CD8-positive, alpha-beta T cell (primary cell): ENCODE measurements at regions of chr11 and their contacts with region 1.

Region 1: GRCh38 chr11:1652771-1653540 is 23.4 kb downstream of the KRTAP5-5 start:
- DNase-seq: peak; percentile 59 to 89 (median 79)
- ATAC-seq: peak; percentile 97
- H3K4me3 ChIP-seq: no peak overlapping the region
- H3K4me3 Mint-ChIP-seq: no peak overlapping the region
- H3K27ac ChIP-seq: no peak overlapping the region
- H3K27ac Mint-ChIP-seq: no peak overlapping the region
- H3K4me1 ChIP-seq: no peaks in the 10 kb centered on the region
- H3K4me1 Mint-ChIP-seq: no peaks in the 10 kb centered on the region
- H3K27me3 ChIP-seq: peaks cover 3 to 12% of the 10 kb centered on the region in 2 experiments
- H3K27me3 Mint-ChIP-seq: peaks cover 23% of the 10 kb centered on the region
- CTCF ChIP-seq: peak; percentile 99

Region 2: DNA sequence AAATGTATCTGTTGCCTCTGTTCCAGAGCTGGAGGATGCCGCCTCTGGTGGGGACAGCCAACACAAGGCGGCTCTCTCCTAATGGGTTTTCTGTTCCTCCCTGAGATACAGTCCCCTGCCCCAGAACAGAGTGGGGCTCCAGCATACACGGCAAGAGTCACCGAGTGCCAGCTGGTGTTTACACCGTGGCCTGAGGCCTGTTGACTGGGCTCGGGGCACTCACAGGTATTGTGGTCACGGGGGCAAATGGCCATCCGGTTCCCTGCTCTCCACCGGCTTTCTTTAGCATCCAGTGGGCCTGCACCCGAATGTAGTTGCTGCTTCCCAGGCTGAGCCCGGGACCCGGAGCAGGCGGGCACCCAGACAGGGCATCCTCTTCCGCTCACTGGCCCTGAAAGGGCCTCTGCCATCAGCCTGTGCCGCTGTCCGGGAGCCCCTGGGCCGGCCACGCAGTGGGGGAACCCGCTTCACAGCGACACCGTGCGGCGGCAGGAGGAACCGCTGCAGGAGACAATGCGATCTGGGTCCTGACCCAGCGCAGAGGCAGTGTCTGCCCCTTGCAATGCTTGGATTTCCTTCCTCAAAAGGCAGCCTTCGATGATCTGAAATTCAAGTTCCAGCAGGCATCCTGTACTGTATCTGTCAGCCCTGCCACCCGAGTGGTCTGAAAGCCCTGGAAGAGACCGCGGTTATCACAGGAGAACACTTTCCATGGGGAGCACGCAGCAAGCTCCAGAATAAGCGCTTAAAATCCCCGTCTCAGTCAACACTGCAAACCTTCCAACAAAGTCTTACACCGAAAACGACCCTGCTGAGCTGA is 24.2 kb before region 1 on chr11:
- CTCF ChIA-PET with region 1: interaction called, 10 read pairs
- POLR2A ChIA-PET with region 1: no interaction called
- intact Hi-C with region 1: no loop called
- DNase-seq: peak; percentile 27 to 75 (median 62)
- ATAC-seq: peak; percentile 93
- H3K4me3 ChIP-seq: no peak overlapping the region
- H3K4me3 Mint-ChIP-seq: no peak overlapping the region
- H3K27ac ChIP-seq: no peak overlapping the region
- H3K27ac Mint-ChIP-seq: no peak overlapping the region
- H3K4me1 ChIP-seq: peaks cover 12% of the 10 kb centered on the region
- H3K4me1 Mint-ChIP-seq: peaks cover 6% of the 10 kb centered on the region
- H3K27me3 ChIP-seq: peaks cover 6 to 10% of the 10 kb centered on the region in 2 experiments
- H3K27me3 Mint-ChIP-seq: peaks cover 30% of the 10 kb centered on the region
- CTCF ChIP-seq: peak; percentile 89

Region 3: GRCh38 chr11:1640076-1640946 is 12.6 kb before region 1 on chr11:
- CTCF ChIA-PET with region 1: interaction called, 21 read pairs
- POLR2A ChIA-PET with region 1: no interaction called
- intact Hi-C with region 1: no loop called
- DNase-seq: peak in 6 of 9 experiments; percentile 9 to 59 (median 32)
- ATAC-seq: no peak
- H3K4me3 ChIP-seq: no peak overlapping the region
- H3K4me3 Mint-ChIP-seq: no peak overlapping the region
- H3K27ac ChIP-seq: no peak overlapping the region
- H3K27ac Mint-ChIP-seq: no peak overlapping the region
- H3K4me1 ChIP-seq: no peaks in the 10 kb centered on the region
- H3K4me1 Mint-ChIP-seq: no peaks in the 10 kb centered on the region
- H3K27me3 ChIP-seq: peaks cover 0 to 2% of the 10 kb centered on the region in 2 experiments
- H3K27me3 Mint-ChIP-seq: peaks cover 24% of the 10 kb centered on the region
- CTCF ChIP-seq: peak; percentile 77

Region 4: DNA sequence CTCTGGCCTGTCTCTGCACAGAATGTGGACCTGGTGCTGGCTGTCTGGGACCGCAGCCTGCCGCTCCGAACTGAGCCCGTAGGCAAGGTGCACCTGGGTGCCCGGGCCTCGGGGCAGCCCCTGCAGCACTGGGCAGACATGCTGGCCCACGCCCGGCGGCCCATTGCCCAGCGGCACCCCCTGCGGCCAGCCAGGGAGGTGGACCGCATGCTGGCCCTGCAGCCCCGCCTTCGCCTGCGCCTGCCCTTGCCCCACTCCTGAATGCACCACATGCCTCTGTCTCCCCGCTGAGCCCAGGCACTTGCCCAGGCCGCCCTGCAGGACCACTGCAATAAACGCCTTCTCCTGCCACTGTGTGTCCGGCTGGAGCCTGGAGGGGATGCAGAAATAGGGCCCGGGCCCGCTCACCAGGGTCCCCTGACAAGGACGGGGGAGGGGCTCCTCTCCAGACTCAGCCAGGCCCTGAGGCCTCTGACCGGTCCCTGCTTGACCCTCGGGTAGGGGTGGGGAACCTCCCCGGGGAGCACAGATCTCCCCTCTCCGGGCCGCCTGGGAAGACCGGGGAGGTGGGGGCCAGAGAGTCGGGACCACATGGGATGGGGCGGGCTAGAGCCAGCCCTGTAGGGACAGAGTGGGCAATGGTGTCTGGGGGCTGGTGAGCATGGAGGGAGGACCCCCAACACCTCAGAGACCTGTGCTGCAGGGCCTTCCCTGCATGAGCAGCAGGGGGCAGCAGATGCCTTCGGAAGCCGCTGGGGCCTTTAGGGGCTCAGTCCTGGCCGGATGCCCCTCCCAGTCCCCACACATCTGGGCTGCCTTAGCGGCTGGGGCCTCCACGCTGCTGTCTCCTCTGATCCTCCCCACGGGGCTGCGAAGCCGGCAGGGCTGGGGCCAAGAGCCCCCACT is 184.5 kb after region 1 on chr11:
- CTCF ChIA-PET with region 1: interaction called, 74 read pairs
- POLR2A ChIA-PET with region 1: no interaction called
- intact Hi-C with region 1: loop called in 1 of 2 experiments (anchors 1 kb)
- DNase-seq: peak; percentile 73 to 94 (median 88)
- ATAC-seq: peak; percentile 98
- H3K4me3 ChIP-seq: no peak overlapping the region
- H3K4me3 Mint-ChIP-seq: no peak overlapping the region
- H3K27ac ChIP-seq: no peak overlapping the region
- H3K27ac Mint-ChIP-seq: no peak overlapping the region
- H3K4me1 ChIP-seq: peaks cover 25% of the 10 kb centered on the region
- H3K4me1 Mint-ChIP-seq: peaks cover 10% of the 10 kb centered on the region
- H3K27me3 ChIP-seq: peaks cover 0 to 6% of the 10 kb centered on the region in 2 experiments
- H3K27me3 Mint-ChIP-seq: no peaks in the 10 kb centered on the region
- CTCF ChIP-seq: peak; percentile 84

Region 5: DNA sequence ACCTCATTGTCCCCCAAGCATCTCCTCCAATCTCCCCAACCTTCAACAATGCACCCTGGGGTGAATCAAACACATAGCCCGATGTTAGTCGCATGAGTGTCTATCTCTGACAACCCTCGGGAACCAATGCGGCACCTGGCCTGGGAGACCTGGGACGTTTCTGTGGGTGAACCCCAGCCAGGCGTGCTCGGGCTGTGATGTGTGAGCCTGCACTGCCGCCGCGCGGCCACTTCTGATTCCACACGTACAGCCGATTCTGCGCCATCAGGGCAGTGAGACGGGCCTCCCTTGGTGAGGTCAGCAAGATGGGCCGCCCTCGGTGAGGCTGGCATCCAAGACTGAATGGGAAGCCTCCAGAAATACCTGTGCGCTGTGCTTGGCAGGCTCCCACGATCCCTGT is 349.9 kb after region 1 on chr11:
- CTCF ChIA-PET with region 1: interaction called, 12 read pairs
- POLR2A ChIA-PET with region 1: no interaction called
- intact Hi-C with region 1: no loop called
- DNase-seq: no peak
- ATAC-seq: peak; percentile 50
- H3K4me3 ChIP-seq: no peak overlapping the region
- H3K4me3 Mint-ChIP-seq: no peak overlapping the region
- H3K27ac ChIP-seq: no peak overlapping the region
- H3K27ac Mint-ChIP-seq: no peak overlapping the region
- H3K4me1 ChIP-seq: no peaks in the 10 kb centered on the region
- H3K4me1 Mint-ChIP-seq: no peaks in the 10 kb centered on the region
- H3K27me3 ChIP-seq: no peaks in the 10 kb centered on the region
- H3K27me3 Mint-ChIP-seq: no peaks in the 10 kb centered on the region
- CTCF ChIP-seq: no peak